ENCODE measurements at regions of chr2 and their contacts with region 1.

Region 1: GRCh38 chr2:232300894-232301387 is 77.6 kb upstream of the ALPP start:
- DNase-seq: peak; percentile 23 to 92
- H3K4me3 ChIP-seq: no peak overlapping the region
- H3K27ac ChIP-seq: 0 out of 2 replicates have a peak overlapping the region, but pooled peaks have one; percentile 28
- H3K4me1 ChIP-seq: peaks cover 14% of the 10 kb centered on the region
- H3K27me3 ChIP-seq: no peaks in the 10 kb centered on the region
- CTCF ChIP-seq: no peak

Region 2: DNA sequence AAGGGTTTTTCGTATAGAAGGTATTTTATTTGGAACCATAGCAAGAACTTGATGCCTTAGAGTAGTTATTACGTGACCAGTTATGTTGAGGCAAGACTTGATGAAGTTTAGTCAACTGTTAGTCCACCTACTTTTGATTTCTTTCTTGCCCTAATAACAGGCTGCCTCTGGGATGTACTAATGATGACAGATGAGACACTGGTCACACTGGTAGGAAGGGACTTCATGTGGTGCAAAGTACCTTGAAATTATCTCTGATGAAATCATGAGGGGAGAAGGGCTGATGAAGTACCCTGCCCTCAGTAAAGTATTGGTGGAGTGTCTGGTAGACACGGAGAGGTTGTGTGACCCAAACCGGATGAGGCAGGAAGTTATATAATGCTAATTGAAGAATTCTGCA is 334.1 kb before region 1 on chr2:
- CTCF ChIA-PET with region 1: no interaction called
- POLR2A ChIA-PET with region 1: interaction called, 11 read pairs
- intact Hi-C with region 1: no loop called
- DNase-seq: no peak
- H3K4me3 ChIP-seq: no peak overlapping the region
- H3K27ac ChIP-seq: no peak overlapping the region
- H3K4me1 ChIP-seq: peaks cover 9% of the 10 kb centered on the region; the same call in 1 of the 2 replicates
- H3K27me3 ChIP-seq: no peaks in the 10 kb centered on the region
- CTCF ChIP-seq: no peak

Region 3: GRCh38 chr2:232113821-232114220 is 187.1 kb before region 1 on chr2:
- CTCF ChIA-PET with region 1: no interaction called
- POLR2A ChIA-PET with region 1: no interaction called
- intact Hi-C with region 1: no loop called
- DNase-seq: peak in 1 of 2 experiments; percentile 39
- H3K4me3 ChIP-seq: no peak overlapping the region
- H3K27ac ChIP-seq: no peak overlapping the region
- H3K4me1 ChIP-seq: 0 out of 2 replicates have a peak, but pooled peaks cover 4% of the 10 kb centered on the region
- H3K27me3 ChIP-seq: no peaks in the 10 kb centered on the region
- CTCF ChIP-seq: no peak

Region 4: GRCh38 chr2:232133078-232133477 is 167.9 kb before region 1 on chr2:
- CTCF ChIA-PET with region 1: interaction called, 12 read pairs
- POLR2A ChIA-PET with region 1: interaction called, 6 read pairs
- intact Hi-C with region 1: no loop called
- DNase-seq: no peak
- H3K4me3 ChIP-seq: no peak overlapping the region
- H3K27ac ChIP-seq: no peak overlapping the region
- H3K4me1 ChIP-seq: no peaks in the 10 kb centered on the region
- H3K27me3 ChIP-seq: no peaks in the 10 kb centered on the region
- CTCF ChIP-seq: peak; percentile 38; the same call in 1 of the 2 replicates

Region 5: DNA sequence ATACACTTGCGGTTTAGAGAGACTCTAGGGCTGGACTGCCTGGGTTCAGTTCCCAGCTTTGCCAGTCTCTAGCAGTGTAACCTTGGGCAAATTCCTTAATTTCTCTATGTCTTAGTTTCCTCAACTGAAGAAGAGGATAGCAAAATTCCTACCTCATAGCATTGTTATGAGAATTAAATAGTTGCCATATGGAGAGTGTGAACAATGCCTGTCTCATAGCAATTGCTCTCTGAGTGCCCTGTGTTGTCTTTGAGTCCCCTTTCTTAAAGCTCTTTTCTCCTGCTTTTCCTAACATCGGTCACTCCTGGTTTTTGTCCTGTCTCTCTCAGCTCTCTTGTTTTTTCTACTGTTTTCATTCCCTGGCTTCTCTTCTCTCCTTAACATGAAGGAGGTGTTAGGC is 39.2 kb before region 1 on chr2:
- CTCF ChIA-PET with region 1: no interaction called
- POLR2A ChIA-PET with region 1: no interaction called
- intact Hi-C with region 1: no loop called
- DNase-seq: no peak
- H3K4me3 ChIP-seq: no peak overlapping the region
- H3K27ac ChIP-seq: no peak overlapping the region
- H3K4me1 ChIP-seq: peaks cover 8% of the 10 kb centered on the region; the same call in 1 of the 2 replicates
- H3K27me3 ChIP-seq: no peaks in the 10 kb centered on the region
- CTCF ChIP-seq: no peak

Measured in PC-9 (cell line).